OCI-LY7 (cell line): ENCODE measurements at regions of chr3 and their contacts with region 1.

Region 1: DNA sequence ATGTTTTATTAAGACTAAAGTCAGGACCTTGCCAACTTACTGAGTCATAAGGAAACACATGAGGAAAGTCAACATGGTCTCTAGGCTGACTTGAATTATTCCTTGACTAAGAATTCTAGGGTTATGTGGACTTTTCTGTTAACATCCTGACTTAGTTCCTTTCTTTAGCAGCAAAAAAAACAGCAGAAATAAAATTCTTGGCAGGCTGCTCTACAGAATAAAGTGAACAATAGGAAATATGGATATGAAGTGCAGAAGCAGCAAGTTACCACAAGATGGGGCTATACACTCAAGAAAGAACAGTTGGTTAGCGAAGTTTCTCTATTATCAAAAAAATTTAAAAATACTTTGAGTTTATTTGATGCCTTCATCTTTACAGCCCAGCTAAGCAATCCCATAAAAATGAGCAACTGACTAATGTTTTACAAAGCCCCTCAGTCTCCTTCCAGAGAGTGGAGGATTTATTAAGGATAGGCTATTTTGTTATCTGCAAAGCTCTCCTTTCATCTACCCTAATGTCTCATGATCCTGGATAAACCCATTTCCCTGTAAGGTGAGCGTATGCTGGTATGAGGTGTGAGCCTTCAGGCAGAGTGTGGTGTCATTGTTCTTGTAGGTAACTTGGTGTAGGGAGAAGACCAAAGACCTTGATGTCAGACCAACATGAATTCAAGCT is 23.1 kb upstream of the MCCC1 start:
- DNase-seq: peak; percentile 70
- H3K4me3 ChIP-seq: no peak overlapping the region
- H3K27ac ChIP-seq: no peak overlapping the region
- H3K4me1 ChIP-seq: no peaks in the 10 kb centered on the region
- CTCF ChIP-seq: peak; percentile 100

Region 2: GRCh38 chr3:182967218-182968204 is 154.9 kb before region 1 on chr3:
- CTCF ChIA-PET with region 1: no interaction called
- POLR2A ChIA-PET with region 1: no interaction called
- intact Hi-C with region 1: no loop called
- DNase-seq: peak; percentile 56
- H3K4me3 ChIP-seq: peak overlapping the region; percentile 14
- H3K27ac ChIP-seq: peak overlapping the region; percentile 12
- H3K4me1 ChIP-seq: peaks cover 32% of the 10 kb centered on the region
- CTCF ChIP-seq: no peak

Region 3: GRCh38 chr3:183161552-183162336 is 39.3 kb after region 1 on chr3:
- CTCF ChIA-PET with region 1: no interaction called
- POLR2A ChIA-PET with region 1: no interaction called
- intact Hi-C with region 1: loop called (anchors 5 kb)
- DNase-seq: peak; percentile 89
- H3K4me3 ChIP-seq: peak overlapping the region; percentile 58
- H3K27ac ChIP-seq: no peak overlapping the region
- H3K4me1 ChIP-seq: peaks cover 28% of the 10 kb centered on the region
- CTCF ChIP-seq: peak; percentile 37; the same call in 1 of the 2 replicates

Region 4: GRCh38 chr3:183178629-183179549 is 56.5 kb after region 1 on chr3:
- CTCF ChIA-PET with region 1: interaction called, 10 read pairs
- POLR2A ChIA-PET with region 1: no interaction called
- intact Hi-C with region 1: loop called (anchors 1 kb)
- DNase-seq: no peak
- H3K4me3 ChIP-seq: no peak overlapping the region
- H3K27ac ChIP-seq: no peak overlapping the region
- H3K4me1 ChIP-seq: no peaks in the 10 kb centered on the region
- CTCF ChIP-seq: no peak

Region 5: DNA sequence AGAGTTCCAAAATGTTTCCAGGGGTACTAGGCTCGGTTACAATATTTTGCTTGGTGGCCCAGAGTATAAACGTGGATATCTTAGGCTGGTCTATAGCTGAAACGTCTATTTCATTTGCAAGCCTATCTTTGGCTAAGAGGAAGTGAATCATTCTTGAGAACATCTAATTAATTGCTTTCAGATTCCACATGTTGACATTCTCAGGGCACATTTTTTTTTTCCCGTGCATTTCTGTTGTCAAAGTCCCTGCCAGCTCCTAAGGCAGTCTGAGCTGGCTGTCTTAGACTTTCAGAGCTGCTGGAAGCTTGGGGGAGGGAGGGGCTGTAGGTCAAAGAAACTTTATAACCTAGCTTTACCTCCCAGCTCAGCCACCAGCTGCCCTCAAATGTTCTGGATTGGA is 63.3 kb after region 1 on chr3:
- CTCF ChIA-PET with region 1: interaction called, 10 read pairs
- POLR2A ChIA-PET with region 1: interaction called, 4 read pairs
- intact Hi-C with region 1: loop called (anchors 1 kb)
- DNase-seq: no peak
- H3K4me3 ChIP-seq: no peak overlapping the region
- H3K27ac ChIP-seq: no peak overlapping the region
- H3K4me1 ChIP-seq: peaks cover 8% of the 10 kb centered on the region
- CTCF ChIP-seq: no peak

Region 6: GRCh38 chr3:183385698-183386613 is 263.6 kb after region 1 on chr3:
- CTCF ChIA-PET with region 1: interaction called, 8 read pairs
- POLR2A ChIA-PET with region 1: interaction called, 6 read pairs
- intact Hi-C with region 1: loop called (anchors 1 kb)
- DNase-seq: peak; percentile 79
- H3K4me3 ChIP-seq: no peak overlapping the region
- H3K27ac ChIP-seq: no peak overlapping the region
- H3K4me1 ChIP-seq: peaks cover 14% of the 10 kb centered on the region
- CTCF ChIP-seq: peak; percentile 93

Region 7: GRCh38 chr3:183468424-183468823 is 346.0 kb after region 1 on chr3:
- CTCF ChIA-PET with region 1: no interaction called
- POLR2A ChIA-PET with region 1: no interaction called
- intact Hi-C with region 1: loop called (anchors 5 kb)
- DNase-seq: no peak
- H3K4me3 ChIP-seq: no peak overlapping the region
- H3K27ac ChIP-seq: no peak overlapping the region
- H3K4me1 ChIP-seq: peaks cover 28% of the 10 kb centered on the region
- CTCF ChIP-seq: no peak

Region 8: DNA sequence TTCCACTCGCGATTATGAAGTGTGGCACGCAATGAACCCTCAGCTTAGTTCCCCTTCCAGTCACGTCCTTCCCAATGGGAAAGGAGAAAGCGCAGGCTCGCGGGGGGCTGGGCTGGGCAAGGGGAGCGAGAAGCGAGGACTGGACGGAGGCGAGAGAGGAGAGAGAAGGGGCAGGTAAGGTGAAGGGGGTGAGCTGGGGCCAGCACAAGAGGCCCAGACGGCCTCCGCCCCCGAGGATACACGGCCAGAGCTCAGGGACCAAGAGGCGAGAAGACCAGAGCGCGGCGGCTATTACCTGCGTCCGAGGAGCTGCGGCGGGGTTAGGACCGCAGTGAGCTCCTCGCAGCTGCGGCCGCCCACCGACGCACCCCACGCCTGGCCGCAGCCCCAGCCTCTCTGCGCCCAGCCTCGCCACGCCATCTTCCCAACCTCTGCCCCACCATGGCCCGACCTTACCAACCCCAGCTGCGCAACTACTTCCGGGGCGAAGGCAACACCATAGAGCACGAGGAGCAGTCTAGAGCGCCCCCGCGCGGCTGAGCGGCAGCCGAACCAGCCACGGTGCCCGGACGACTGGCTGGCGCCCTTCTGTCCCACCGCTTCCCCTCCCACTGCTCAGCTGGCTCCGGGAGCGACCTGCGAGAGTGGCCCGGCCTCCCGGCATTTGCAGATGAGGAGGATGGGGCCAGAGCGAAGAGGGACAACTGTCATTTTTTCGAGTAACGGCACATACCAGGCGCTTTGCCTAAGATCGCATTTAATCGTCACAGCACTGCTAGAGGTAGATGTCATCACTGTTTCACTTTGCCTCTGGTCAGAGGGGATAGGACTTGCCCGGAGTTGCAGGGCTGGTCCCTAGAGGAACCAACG is 762.3 kb after region 1 on chr3 and contains the start of gene PARL:
- CTCF ChIA-PET with region 1: no interaction called
- POLR2A ChIA-PET with region 1: no interaction called
- intact Hi-C with region 1: loop called (anchors 10 kb)
- DNase-seq: peak; percentile 95
- H3K4me3 ChIP-seq: peak within 1 kb of the TSS; percentile 76
- H3K27ac ChIP-seq: peak within 1 kb of the TSS; percentile 47
- H3K4me1 ChIP-seq: peaks cover 19% of the 10 kb centered on the region
- CTCF ChIP-seq: peak; percentile 86
- total RNA-seq, gene PARL: 43.5 and 46.1 TPM in 2 replicates